Activated CD8-positive, alpha-beta memory T cell treated with anti-CD3 and anti-CD28 coated beads, Interleukin-2, amount 10 ng/mL, durations not matched to agents 7 days and 5 days (primary cell): ENCODE measurements at regions of chr6 and their contacts with region 1.

Region 1: GRCh38 chr6:136226027-136226673 is 24.0 kb downstream of the MTFR2 start:
- DNase-seq: peak; percentile 61
- ATAC-seq: peak; percentile 84
- H3K4me3 Mint-ChIP-seq: no peak overlapping the region
- H3K27ac Mint-ChIP-seq: peak overlapping the region; percentile 30
- H3K4me1 Mint-ChIP-seq: peaks cover 7% of the 10 kb centered on the region
- H3K27me3 Mint-ChIP-seq: peaks cover 3% of the 10 kb centered on the region

Region 2: DNA sequence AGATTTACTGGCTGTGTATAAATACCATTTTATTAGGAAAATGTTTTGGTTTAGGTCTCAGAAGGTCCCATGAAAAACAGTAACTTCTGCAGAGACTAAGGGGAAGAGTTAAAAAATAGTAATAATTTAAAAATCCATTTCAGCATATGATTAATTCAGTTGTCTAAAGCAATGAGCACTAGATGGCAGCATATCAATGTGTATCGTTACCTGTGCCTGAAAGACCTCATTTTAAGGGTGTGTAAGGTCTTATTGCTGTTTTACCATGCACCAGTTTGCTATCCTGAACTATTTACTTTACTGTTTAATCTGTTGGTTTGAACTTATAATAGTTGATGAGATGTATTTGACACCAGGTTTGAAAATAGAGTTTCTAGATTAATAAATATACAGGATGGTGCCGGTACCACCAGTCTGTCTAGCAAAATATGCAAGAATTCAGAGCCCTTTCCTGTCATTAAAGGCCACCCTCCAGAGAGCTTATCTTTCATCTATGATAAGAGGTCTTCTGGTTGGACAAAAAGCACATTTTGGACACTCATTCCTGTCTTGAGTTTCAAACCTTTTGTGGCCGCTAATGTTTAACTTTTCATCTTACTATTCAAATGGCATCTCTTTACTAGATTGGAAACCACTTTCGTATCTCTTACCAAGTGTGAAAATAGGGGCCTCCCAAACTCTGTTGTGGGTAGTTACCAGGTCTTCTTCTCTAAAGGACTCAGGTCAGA is 719.7 kb before region 1 on chr6:
- CTCF ChIA-PET with region 1: interaction called, 26 read pairs
- DNase-seq: no peak
- ATAC-seq: peak; percentile 90
- H3K4me3 Mint-ChIP-seq: no peak overlapping the region
- H3K27ac Mint-ChIP-seq: peak overlapping the region; percentile 59
- H3K4me1 Mint-ChIP-seq: peaks cover 12% of the 10 kb centered on the region
- H3K27me3 Mint-ChIP-seq: no peaks in the 10 kb centered on the region

Region 3: GRCh38 chr6:135675862-135676261 is 550.3 kb before region 1 on chr6:
- CTCF ChIA-PET with region 1: interaction called, 15 read pairs
- DNase-seq: peak; percentile 47
- ATAC-seq: peak; percentile 68
- H3K4me3 Mint-ChIP-seq: no peak overlapping the region
- H3K27ac Mint-ChIP-seq: no peak overlapping the region
- H3K4me1 Mint-ChIP-seq: peaks cover 16% of the 10 kb centered on the region
- H3K27me3 Mint-ChIP-seq: no peaks in the 10 kb centered on the region

Region 4: DNA sequence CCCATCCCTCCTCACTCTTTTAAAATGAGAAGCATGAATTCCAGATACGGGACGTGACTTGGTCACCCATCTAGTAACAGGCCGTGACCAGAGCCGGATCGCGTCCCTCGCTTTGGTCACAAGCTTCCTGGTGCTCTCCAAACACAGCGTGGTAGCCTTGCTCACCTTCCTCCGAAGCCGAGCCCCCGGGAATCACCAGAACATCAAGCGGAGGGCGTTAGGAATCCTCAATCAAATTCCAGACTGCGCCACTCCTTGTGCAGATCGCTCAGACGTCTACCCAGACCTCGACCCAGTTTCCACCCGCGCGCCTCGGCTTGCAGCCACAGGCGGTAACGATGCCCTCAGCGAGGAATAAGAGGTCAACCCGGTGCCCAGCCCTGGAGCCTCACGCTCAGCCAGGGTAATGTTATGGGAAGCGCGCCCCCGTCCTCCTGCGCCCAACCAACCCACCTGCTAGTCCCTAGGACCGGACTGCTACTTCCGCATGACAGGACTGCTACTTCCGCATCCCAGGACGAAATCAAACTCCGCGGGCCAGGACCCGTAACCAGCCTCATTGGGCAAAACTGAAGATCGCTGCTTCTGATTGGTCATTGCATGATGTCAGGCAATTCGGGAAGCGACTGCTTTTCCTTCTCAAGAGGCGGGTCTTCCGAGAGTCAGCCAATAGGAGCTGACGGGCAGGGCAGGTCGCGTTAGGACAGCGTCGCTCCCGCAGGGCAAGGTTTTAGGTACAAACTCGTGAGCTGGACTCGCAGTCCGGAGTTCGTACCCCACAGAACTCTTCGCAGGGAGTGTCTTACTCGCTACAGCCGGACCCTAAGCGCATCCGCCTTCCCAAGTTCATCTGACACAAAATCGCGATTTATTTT is 23.9 kb after region 1 on chr6 and contains the start of gene MTFR2:
- CTCF ChIA-PET with region 1: interaction called, 10 read pairs
- DNase-seq: peak; percentile 98
- ATAC-seq: peak; percentile 94
- H3K4me3 Mint-ChIP-seq: peak within 1 kb of the TSS; percentile 97
- H3K27ac Mint-ChIP-seq: peak within 1 kb of the TSS; percentile 89
- H3K4me1 Mint-ChIP-seq: peaks cover 78% of the 10 kb centered on the region
- H3K27me3 Mint-ChIP-seq: no peaks in the 10 kb centered on the region
- total RNA-seq, gene MTFR2: 31.8 to 35.8 TPM